Heart left ventricle (tissue), 16 donors: ENCODE measurements at regions of chr20 and their contacts with region 1.

Region 1: GRCh38 chr20:7123457-7123856 is 356.0 kb downstream of the BMP2 start:
- DNase-seq: peak in 4 of 5 donors; percentile 27 to 61 (median 46)
- ATAC-seq: peak; percentile 98 to 100 (median 99)
- H3K4me3 ChIP-seq: no peak overlapping the region
- H3K27ac ChIP-seq: peak overlapping the region in 10 of 12 donors; percentile 42 to 82 (median 74)
- H3K4me1 ChIP-seq: peaks cover 0 to 10% (median 0%) of the 10 kb centered on the region in 12 donors
- H3K27me3 ChIP-seq: no peaks in the 10 kb centered on the region
- CTCF ChIP-seq: no peak
- POLR2A ChIP-seq: no peak

Region 2: DNA sequence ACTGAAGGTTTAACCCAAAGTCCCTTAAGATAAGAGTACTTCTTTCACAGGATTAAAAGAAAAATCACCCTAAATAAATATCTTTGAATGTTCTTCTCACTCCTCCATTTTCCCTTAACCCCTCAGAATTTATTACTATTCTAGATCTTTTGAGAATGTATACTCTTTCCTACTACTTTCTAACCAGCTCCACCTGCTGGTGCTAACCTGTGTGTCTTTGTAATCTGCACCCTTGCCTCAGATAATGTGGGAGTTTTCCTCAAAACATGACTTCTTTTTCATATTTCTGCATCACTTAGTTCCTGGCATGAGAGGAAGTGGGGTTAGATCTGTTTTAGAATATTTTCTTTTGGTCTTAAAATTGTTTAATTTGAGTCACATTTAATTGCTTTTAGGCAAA is 38.2 kb after region 1 on chr20:
- intact Hi-C with region 1: loop called in 1 of 10 experiments (anchors 5 kb)
- DNase-seq: no peak
- ATAC-seq: no peak
- H3K4me3 ChIP-seq: no peak overlapping the region
- H3K27ac ChIP-seq: no peak overlapping the region
- H3K4me1 ChIP-seq: no peaks in the 10 kb centered on the region
- H3K27me3 ChIP-seq: no peaks in the 10 kb centered on the region
- CTCF ChIP-seq: peak in 9 of 12 donors; percentile 10 to 57 (median 39)
- POLR2A ChIP-seq: no peak

Region 3: DNA sequence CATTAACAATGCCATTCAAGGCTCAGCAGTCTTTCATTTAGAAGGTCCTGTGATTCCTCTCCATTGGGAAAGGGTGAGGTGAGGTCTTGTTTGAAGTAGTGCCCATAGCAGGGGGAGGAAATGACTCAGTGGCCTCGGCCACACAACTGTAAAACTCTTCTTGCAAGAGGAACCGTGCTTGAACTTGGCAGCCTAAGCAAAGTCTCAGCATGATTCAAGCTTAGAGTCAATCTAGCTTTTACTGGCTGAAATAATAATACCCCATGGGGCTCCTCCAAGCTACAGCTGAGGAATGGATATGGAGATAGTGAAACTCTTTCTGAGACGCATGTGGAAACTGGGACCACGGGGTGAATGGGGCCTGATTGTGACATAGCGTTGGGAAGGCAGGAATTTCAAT is 72.2 kb after region 1 on chr20:
- intact Hi-C with region 1: no loop called
- DNase-seq: peak in 1 of 5 donors; percentile 30
- ATAC-seq: peak in 3 of 4 donors; percentile 24 to 82 (median 70)
- H3K4me3 ChIP-seq: no peak overlapping the region
- H3K27ac ChIP-seq: no peak overlapping the region
- H3K4me1 ChIP-seq: no peaks in the 10 kb centered on the region
- H3K27me3 ChIP-seq: no peaks in the 10 kb centered on the region
- CTCF ChIP-seq: no peak
- POLR2A ChIP-seq: no peak

Region 4: DNA sequence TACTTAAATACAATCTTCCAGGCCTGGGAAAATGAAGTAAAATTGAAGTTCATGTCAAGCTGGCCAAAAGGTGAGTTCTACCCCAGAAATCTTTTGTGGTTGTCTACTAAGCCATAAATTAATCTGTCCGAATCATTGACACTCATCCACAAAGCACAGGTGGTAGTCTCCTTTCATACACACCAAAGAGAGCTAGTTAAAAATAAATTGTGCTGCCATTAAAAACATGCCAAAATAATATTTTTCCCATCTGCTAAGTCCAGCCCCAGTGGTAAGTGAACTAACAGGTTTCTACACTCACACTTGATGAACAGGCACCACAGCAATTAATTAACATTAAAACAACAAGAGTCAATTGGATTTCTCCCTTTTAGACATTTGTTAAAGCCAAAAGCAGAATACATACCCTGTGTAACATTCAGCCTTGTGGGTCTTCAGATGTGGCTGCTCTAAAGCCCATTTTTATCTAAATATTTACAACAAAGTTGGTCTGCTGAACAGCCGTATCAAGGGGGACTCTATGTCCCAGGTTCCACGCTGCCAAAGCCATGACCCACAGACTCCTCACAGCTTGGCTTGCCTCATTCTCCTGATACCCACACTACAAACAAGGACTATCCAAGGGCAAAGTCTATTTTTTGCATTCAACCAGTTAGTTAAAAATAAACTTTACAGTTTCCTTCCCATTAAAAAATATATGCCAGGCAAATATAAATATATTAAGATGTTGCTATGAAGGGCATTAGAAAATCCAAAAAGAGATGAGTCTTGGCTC is 134.4 kb after region 1 on chr20:
- intact Hi-C with region 1: loop called in 1 of 10 experiments (anchors 10 kb)
- DNase-seq: peak; percentile 31 to 63 (median 58)
- ATAC-seq: peak; percentile 96 to 99 (median 98)
- H3K4me3 ChIP-seq: peak overlapping the region; percentile 22 to 56 (median 30)
- H3K27ac ChIP-seq: peak overlapping the region in 11 of 12 donors; percentile 3 to 86 (median 75)
- H3K4me1 ChIP-seq: peaks cover 0 to 14% (median 0%) of the 10 kb centered on the region in 12 donors
- H3K27me3 ChIP-seq: no peaks in the 10 kb centered on the region
- CTCF ChIP-seq: no peak
- POLR2A ChIP-seq: no peak

Region 5: DNA sequence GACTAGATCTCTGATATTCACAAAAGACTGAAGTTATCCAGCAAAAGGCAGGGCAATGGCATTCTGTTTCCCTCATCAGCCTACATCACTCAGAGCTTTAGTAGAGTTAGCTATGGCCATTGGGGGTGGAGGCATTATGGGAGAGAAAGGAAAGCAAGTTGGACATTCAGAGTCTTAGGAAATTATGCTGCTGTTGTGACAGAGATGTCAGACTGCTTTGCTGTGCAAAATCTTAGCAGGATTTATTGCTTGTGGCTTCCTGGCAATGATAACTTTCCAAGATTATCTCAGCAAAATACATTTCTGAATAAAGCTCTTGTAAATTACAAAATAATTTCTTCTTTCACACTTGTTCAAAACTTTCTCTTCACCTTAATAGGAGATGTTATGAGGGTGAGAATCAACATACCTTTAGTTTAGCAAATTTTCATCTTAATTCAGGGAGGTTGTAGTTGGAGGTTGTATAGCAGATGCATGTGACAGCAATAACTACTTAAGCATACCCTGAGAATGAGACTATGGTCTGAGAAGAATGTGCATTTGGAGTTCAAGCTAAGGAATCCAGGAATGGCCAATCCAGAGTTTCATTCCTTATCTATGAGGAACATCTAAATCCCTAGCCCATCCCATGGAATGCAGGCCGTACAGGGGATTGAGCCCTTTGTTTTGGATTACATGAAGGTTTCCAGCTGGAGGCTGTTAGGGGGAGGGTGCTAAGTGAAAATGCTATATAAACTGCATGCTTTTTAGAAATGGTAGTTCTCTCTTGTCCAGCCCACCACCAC is 637.0 kb after region 1 on chr20:
- intact Hi-C with region 1: no loop called
- DNase-seq: no peak
- ATAC-seq: no peak
- H3K4me3 ChIP-seq: no peak overlapping the region
- H3K27ac ChIP-seq: no peak overlapping the region
- H3K4me1 ChIP-seq: no peaks in the 10 kb centered on the region
- H3K27me3 ChIP-seq: no peaks in the 10 kb centered on the region
- CTCF ChIP-seq: no peak
- POLR2A ChIP-seq: no peak